WTC11 (cell line): ENCODE measurements at regions of chr13 and their contacts with region 1.

Region 1: GRCh38 chr13:21476893-21477472 is 17.9 kb upstream of the ZDHHC20 start:
- DNase-seq: peak; percentile 93
- ATAC-seq: peak; percentile 89
- H3K4me3 Mint-ChIP-seq: peak overlapping the region; percentile 70
- H3K27ac Mint-ChIP-seq: peak overlapping the region; percentile 52; the same call in 1 of the 2 replicates
- H3K4me1 Mint-ChIP-seq: peaks cover 4% of the 10 kb centered on the region
- H3K27me3 Mint-ChIP-seq: no peaks in the 10 kb centered on the region
- CTCF ChIP-seq: peak; percentile 96

Region 2: DNA sequence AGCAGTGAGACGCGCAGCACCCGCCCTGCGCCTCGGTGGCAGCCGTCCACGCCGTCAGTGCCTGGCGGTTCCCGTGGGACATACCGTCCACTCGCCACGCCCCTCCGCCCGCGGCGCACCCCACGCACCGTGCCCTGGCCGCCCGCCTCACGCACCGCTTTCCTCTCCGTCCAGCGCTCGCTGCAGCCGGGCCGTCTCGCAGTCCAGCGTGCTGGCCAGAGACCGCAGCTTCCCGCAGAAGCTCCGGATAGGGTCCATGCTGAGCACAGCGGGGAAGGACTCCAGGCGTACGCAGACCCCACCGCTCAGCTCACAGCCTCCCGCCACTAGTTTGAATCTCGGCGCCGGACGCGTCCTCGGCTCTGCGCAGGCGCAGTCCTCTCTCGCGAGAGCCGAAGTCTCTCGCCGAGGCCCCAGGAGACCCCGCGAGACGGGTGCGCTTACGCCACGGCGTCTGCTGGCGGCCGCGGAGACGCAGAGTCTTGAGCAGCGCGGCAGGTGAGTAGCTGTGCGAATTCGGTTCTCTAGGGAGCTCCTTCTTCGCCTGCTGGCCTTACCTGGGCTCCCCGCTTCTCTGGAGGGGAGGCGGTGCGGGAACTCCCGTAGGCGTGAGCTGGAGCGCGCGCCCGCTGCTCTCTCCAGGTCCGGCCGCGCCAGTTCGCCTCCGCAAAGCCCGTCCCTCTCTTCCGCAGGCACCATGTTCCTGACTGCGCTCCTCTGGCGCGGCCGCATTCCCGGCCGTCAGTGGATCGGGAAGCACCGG is 300.6 kb before region 1 on chr13 and contains the starts of genes MRPL57 and SKA3:
- CTCF ChIA-PET with region 1: interaction called, 10 read pairs
- POLR2A ChIA-PET with region 1: interaction called, 3 read pairs
- DNase-seq: peak; percentile 96
- ATAC-seq: peak; percentile 90
- H3K4me3 Mint-ChIP-seq: peak within 1 kb of the TSS; percentile 95
- H3K27ac Mint-ChIP-seq: peak within 1 kb of the TSS; percentile 98
- H3K4me1 Mint-ChIP-seq: peaks cover 41% of the 10 kb centered on the region
- H3K27me3 Mint-ChIP-seq: no peaks in the 10 kb centered on the region
- CTCF ChIP-seq: no peak
- total RNA-seq, gene MRPL57: 29.4 to 32.3 TPM (median 32.1 TPM) in 3 replicates
- total RNA-seq, gene SKA3: 38.8 to 45.7 TPM (median 42.1 TPM) in 3 replicates

Region 3: GRCh38 chr13:21240586-21240985 is 236.4 kb before region 1 on chr13:
- CTCF ChIA-PET with region 1: interaction called, 20 read pairs
- POLR2A ChIA-PET with region 1: no interaction called
- DNase-seq: no peak
- ATAC-seq: no peak
- H3K4me3 Mint-ChIP-seq: no peak overlapping the region
- H3K27ac Mint-ChIP-seq: no peak overlapping the region; the same call in 1 of the 2 replicates
- H3K4me1 Mint-ChIP-seq: peaks cover 3% of the 10 kb centered on the region
- H3K27me3 Mint-ChIP-seq: no peaks in the 10 kb centered on the region
- CTCF ChIP-seq: no peak

Region 4: DNA sequence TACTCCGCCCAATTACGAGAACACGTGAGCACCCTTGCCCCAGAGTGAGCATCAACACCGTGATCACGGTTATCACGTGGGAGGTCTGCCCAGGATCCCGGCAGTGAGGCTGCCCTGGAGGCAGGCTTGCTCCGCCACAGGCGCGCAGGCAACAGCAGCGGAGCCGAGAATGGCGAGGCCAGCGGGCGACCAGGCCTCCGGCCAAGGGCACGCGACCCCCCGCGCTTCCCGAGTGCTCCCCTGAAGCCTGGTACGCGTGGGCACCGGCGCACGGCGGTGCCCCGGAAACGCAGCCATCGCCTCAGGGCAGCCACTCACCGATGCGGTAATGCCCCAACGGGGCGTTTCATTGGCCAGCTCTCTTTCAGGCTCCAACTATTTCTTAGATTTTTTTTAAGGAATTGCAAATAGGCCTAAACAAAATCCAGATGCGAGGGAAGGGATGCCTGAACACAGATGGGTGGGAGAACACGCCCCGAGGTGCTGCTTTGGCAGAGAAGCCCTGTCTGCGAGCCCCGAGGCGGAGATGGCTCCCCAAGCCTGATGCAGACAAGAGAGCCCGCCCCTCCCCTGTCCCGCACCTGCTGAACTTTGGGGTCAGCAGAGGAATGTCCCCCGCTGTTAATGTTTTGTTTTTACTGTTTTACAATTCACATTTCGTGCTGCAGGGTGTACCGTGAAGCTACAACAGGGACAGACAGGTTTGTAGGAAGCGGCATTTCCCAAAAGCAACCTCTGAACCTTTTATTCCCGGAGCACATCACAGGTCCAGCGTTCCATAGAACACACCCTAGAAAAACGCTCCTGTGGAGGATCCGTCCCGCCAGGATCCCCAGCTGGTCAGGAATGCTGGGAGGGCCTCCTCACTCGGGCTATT is 150.6 kb before region 1 on chr13:
- CTCF ChIA-PET with region 1: interaction called, 21 read pairs
- POLR2A ChIA-PET with region 1: no interaction called
- DNase-seq: peak; percentile 86
- ATAC-seq: peak; percentile 75
- H3K4me3 Mint-ChIP-seq: peak overlapping the region; percentile 60
- H3K27ac Mint-ChIP-seq: peak overlapping the region; percentile 87
- H3K4me1 Mint-ChIP-seq: peaks cover 56% of the 10 kb centered on the region
- H3K27me3 Mint-ChIP-seq: peaks cover 34% of the 10 kb centered on the region
- CTCF ChIP-seq: no peak

Region 5: GRCh38 chr13:21338156-21338555 is 138.8 kb before region 1 on chr13:
- CTCF ChIA-PET with region 1: interaction called, 18 read pairs
- POLR2A ChIA-PET with region 1: no interaction called
- DNase-seq: no peak
- ATAC-seq: peak; percentile 65
- H3K4me3 Mint-ChIP-seq: no peak overlapping the region
- H3K27ac Mint-ChIP-seq: no peak overlapping the region
- H3K4me1 Mint-ChIP-seq: peaks cover 41% of the 10 kb centered on the region
- H3K27me3 Mint-ChIP-seq: no peaks in the 10 kb centered on the region; the same call in 1 of the 2 replicates
- CTCF ChIP-seq: no peak

Region 6: DNA sequence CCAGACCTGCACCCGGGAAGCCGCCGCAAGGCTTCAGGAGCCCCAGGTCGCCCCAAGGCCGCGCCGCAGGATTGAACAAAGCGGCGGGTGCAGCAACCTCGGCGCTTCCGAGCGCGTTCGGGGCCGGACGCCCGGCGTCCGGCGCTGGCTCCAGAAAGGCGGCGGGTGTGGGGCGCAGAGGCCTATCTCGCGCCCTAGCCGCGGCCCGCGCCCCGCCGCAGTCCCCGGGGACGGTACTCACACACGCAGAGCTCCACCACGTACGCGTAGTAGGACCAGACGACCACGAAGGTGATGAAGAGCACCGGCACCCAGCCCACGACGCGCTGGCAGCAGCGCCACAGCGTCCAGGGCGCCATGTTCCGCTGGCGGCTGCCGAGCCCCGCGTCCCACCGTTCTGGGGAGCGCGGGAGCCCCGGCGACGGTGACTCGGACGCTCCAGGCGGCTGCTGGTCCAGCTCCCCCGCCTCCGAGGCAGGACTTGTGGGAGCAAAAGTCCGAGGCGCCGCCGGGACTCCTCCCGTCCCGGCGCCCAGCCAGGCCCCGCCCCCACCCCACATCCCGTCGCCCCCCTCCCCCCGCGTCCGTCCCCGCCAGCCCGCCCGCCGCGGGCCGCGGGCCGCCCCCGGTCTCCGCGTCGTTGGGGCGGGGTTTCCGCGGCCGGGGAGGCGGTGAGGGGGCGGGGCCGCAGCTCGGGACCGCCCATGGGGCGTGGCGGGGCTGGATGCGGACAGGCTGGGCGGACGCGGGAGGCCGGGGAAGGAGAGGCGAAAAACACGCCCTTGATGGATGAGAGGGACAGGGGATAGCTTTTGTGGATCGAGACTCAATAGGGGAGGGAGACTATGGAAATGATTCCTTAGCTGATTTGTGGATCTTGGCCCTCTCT is 17.9 kb before region 1 on chr13 and contains the start of gene ZDHHC20:
- CTCF ChIA-PET with region 1: interaction called, 13 read pairs
- POLR2A ChIA-PET with region 1: no interaction called
- DNase-seq: peak; percentile 90
- ATAC-seq: peak; percentile 87
- H3K4me3 Mint-ChIP-seq: peak within 1 kb of the TSS; percentile 91
- H3K27ac Mint-ChIP-seq: peak within 1 kb of the TSS; percentile 89
- H3K4me1 Mint-ChIP-seq: peaks cover 29% of the 10 kb centered on the region
- H3K27me3 Mint-ChIP-seq: no peaks in the 10 kb centered on the region
- CTCF ChIP-seq: no peak
- total RNA-seq, gene ZDHHC20: 64.7 to 69.7 TPM (median 65.1 TPM) in 3 replicates

Region 7: DNA sequence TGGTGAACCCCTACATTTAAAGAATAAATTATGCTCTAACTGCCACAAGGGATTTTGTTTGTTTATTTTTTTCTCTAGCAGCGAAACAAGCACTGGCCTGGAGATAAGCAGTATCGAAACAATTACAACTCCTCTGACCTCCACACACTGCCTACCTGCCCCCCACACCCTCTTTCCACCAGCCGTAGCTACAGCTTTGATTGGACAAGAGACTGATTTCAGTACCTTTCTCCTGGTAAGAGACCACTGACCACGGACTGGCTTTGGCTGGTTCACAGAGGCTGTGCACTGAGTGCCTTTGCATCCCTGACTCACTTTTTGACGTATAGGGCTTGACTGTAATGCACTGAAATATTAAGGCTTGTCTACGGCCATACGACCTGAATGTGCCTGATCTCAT is 10.5 kb before region 1 on chr13:
- CTCF ChIA-PET with region 1: interaction called, 16 read pairs
- POLR2A ChIA-PET with region 1: no interaction called
- DNase-seq: no peak
- ATAC-seq: peak; percentile 46; the same call in 1 of the 2 replicates
- H3K4me3 Mint-ChIP-seq: no peak overlapping the region
- H3K27ac Mint-ChIP-seq: 0 out of 2 replicates have a peak overlapping the region, but pooled peaks have one; percentile 19
- H3K4me1 Mint-ChIP-seq: peaks cover 19% of the 10 kb centered on the region
- H3K27me3 Mint-ChIP-seq: peaks cover 3% of the 10 kb centered on the region
- CTCF ChIP-seq: no peak

Region 8: DNA sequence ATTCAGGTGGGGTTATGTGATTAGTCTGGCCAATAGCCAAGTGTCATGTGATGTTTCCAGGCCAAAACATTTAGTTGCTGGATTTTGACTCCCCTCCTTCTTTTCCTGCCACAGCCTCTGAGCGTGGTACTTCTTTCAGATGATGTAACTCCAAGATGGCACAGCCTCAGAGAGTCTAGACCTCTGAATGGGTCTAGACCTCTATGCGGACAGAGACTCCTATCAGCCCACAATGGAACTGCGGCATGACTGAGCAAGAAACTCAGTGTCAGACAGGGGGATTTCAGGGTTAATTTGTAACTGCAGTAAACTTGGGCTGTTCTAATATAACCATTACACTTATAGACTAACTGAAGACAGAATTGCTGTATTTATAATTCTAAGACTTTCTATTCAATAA is 24.7 kb after region 1 on chr13:
- CTCF ChIA-PET with region 1: no interaction called
- POLR2A ChIA-PET with region 1: no interaction called
- DNase-seq: peak; percentile 32
- ATAC-seq: peak; percentile 95
- H3K4me3 Mint-ChIP-seq: no peak overlapping the region
- H3K27ac Mint-ChIP-seq: peak overlapping the region; percentile 79
- H3K4me1 Mint-ChIP-seq: no peaks in the 10 kb centered on the region
- H3K27me3 Mint-ChIP-seq: no peaks in the 10 kb centered on the region
- CTCF ChIP-seq: no peak